ENCODE measurements at regions of chr12 and their contacts with region 1.

Region 1: GRCh38 chr12:17527021-17527512 is 562.9 kb downstream of the RERGL start:
- DNase-seq: no peak
- H3K4me3 ChIP-seq: no peak overlapping the region
- H3K27ac ChIP-seq: no peak overlapping the region
- H3K4me1 ChIP-seq: no peaks in the 10 kb centered on the region
- H3K27me3 ChIP-seq: no peaks in the 10 kb centered on the region
- CTCF ChIP-seq: no peak
- EP300 ChIP-seq: no peak
- POLR2A ChIP-seq: no peak
- RAD21 ChIP-seq: no peak

Region 2: DNA sequence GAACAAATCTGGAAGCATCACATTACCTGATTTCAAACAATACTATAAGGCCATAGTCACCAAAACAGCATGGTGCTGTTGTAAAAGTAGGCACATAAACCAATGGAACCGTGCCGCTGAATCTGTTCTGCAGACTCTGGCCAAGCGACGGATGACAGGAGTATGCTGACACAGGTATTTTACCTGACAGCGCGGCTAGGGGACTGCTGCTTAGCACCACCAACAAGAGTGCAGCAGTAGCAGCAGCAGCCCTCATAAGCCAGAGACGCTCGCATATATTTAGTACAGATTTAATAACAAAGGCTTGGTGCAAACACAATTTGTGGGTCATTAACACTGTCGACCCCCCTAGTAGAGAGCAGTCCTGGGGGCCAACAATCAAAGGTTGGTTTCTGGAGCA is 243.5 kb before region 1 on chr12:
- CTCF ChIA-PET with region 1: no interaction called
- POLR2A ChIA-PET with region 1: no interaction called
- DNase-seq: no peak
- H3K4me3 ChIP-seq: no peak overlapping the region
- H3K27ac ChIP-seq: no peak overlapping the region
- H3K4me1 ChIP-seq: no peaks in the 10 kb centered on the region
- H3K27me3 ChIP-seq: no peaks in the 10 kb centered on the region
- CTCF ChIP-seq: no peak
- EP300 ChIP-seq: no peak
- POLR2A ChIP-seq: no peak
- RAD21 ChIP-seq: no peak

Region 3: DNA sequence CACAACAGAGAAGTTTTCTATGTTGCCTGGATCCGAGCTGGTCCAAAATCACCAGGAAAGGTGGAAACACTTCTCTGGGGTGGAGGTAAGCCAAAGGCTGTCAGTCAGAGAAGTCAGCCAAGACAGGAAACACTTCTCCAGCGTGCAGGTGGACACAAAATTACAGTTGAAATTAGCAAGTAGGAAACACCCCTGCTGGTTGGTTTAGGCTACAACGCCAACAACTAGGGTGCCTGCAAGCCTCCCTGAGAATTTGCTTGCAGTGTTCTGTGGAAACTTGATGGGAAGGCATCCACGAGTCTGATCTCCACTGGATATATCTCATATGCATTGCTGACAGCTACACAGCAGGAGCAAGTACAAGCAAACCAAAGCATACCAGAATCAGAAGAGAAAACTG is 37.6 kb before region 1 on chr12:
- CTCF ChIA-PET with region 1: no interaction called
- POLR2A ChIA-PET with region 1: no interaction called
- DNase-seq: no peak
- H3K4me3 ChIP-seq: no peak overlapping the region
- H3K27ac ChIP-seq: no peak overlapping the region
- H3K4me1 ChIP-seq: no peaks in the 10 kb centered on the region
- H3K27me3 ChIP-seq: no peaks in the 10 kb centered on the region
- CTCF ChIP-seq: peak; percentile 15 to 52 (median 32); a peak in 2 of 4 replicates
- EP300 ChIP-seq: no peak
- POLR2A ChIP-seq: no peak
- RAD21 ChIP-seq: peak; percentile 10 to 25; a peak in 2 of 4 replicates

Region 4: DNA sequence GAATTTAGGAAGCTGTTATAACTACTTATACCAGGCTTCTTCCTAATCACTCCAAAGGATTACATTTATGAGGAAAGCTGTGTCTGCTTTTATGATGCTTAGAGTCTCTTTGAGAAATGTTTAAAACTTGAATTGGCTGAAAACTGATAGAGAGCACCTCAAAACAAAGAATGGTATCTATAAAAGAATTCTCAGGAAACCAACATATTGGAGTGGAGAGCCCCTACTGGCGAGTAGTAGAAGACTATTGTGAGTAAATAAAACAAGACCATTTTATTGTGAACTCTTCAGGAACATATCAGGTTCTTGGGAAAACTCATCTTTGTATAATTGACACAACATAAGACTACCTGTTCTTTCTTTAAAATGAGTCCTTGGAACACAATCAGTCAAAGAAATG is 15.7 kb before region 1 on chr12:
- CTCF ChIA-PET with region 1: interaction called, 13 read pairs
- POLR2A ChIA-PET with region 1: no interaction called
- DNase-seq: no peak
- H3K4me3 ChIP-seq: no peak overlapping the region
- H3K27ac ChIP-seq: no peak overlapping the region
- H3K4me1 ChIP-seq: peaks cover 0 to 3% (median 0%) of the 10 kb centered on the region in 4 experiments; a peak in 1 of 7 replicates
- H3K27me3 ChIP-seq: no peaks in the 10 kb centered on the region
- CTCF ChIP-seq: peak in 1 of 3 experiments; percentile 43; a peak in 2 of 4 replicates
- EP300 ChIP-seq: no peak
- POLR2A ChIP-seq: no peak
- RAD21 ChIP-seq: peak; percentile 24 to 39; a peak in 3 of 4 replicates